GM12878 (cell line): ENCODE measurements at regions of chr11 and their contacts with region 1.

Region 1: DNA sequence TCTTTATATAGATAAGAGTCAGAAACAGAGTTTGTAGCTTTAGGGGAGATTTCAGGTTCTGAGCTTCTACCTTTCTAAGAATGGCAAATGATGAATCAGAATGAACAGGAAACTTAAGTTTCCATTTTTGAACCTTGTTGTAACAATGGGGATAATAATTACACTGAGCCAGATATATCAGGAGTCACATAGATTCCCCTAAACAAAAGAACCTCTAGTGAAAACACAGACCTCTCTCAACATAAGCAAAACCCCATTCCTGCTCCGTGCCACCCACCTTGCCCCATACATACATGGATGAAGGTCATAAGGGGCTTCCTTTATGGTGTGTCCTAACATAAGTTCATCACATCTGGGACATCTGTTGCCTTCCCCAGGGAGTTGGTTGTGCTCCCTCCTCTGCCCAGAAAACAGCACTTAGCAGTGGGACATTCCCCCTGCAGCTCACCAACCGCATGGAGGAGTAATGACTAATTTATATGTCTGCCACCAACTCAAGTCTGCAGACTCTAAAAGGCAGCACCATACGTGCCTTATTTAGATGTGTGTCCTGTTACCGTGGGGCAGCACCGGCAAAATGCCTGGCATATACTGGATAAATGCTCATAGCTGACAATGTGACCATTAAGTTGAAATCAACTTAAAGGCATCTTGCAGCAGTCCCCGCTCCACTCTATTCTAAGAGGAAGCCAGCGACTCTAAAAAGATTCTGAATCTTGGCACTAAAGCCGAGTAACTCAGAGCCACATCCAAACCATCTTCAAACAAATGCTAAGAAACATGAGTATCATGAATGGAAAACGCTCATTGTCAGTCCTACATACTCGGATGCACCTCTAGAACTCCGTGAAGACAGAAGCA is 8.0 kb downstream of the JAML start:
- DNase-seq: no peak
- ATAC-seq: peak; percentile 82
- H3K4me3 ChIP-seq: peak overlapping the region; percentile 15; the same call in 1 of the 2 replicates
- H3K27ac ChIP-seq: peak overlapping the region; percentile 33; the same call in 1 of the 2 replicates
- H3K4me1 ChIP-seq: peaks cover 36% of the 10 kb centered on the region
- H3K27me3 ChIP-seq: no peaks in the 10 kb centered on the region
- CTCF ChIP-seq: peak in 1 of 3 experiments; percentile 17; a peak in 2 of 6 replicates
- EP300 ChIP-seq: peak in 1 of 2 experiments; percentile 64; a peak in 1 of 4 replicates
- POLR2A ChIP-seq: no peak
- RAD21 ChIP-seq: peak; percentile 34; the same call in 1 of the 2 replicates

Region 2: DNA sequence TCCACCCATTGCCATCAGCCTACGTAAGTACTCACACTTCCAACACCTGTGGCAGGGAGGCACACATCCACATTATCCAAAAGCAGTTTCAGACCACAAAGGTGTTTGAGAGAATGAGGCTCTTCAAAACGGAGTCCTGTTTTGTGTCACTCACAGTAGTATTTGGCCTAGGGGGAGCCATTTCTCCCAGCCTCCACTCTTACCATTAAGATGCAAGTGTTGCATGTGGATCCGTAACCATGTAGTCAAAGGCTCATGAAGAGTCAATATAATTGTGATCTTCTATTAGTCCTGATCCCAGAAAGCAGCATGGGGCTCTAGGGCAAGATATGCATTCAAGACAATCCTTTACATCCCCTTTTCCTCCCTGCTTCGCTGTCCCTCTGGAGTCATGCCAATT is 189.2 kb before region 1 on chr11:
- CTCF ChIA-PET with region 1: no interaction called
- POLR2A ChIA-PET with region 1: no interaction called
- RAD21 ChIA-PET with region 1: no interaction called
- SMC1A ChIA-PET with region 1: no interaction called
- in situ Hi-C with region 1: no loop called
- intact Hi-C with region 1: no loop called
- DNase-seq: no peak
- ATAC-seq: no peak
- H3K4me3 ChIP-seq: no peak overlapping the region
- H3K27ac ChIP-seq: no peak overlapping the region
- H3K4me1 ChIP-seq: no peaks in the 10 kb centered on the region
- H3K27me3 ChIP-seq: no peaks in the 10 kb centered on the region
- CTCF ChIP-seq: no peak
- EP300 ChIP-seq: no peak
- POLR2A ChIP-seq: no peak
- RAD21 ChIP-seq: no peak

Region 3: DNA sequence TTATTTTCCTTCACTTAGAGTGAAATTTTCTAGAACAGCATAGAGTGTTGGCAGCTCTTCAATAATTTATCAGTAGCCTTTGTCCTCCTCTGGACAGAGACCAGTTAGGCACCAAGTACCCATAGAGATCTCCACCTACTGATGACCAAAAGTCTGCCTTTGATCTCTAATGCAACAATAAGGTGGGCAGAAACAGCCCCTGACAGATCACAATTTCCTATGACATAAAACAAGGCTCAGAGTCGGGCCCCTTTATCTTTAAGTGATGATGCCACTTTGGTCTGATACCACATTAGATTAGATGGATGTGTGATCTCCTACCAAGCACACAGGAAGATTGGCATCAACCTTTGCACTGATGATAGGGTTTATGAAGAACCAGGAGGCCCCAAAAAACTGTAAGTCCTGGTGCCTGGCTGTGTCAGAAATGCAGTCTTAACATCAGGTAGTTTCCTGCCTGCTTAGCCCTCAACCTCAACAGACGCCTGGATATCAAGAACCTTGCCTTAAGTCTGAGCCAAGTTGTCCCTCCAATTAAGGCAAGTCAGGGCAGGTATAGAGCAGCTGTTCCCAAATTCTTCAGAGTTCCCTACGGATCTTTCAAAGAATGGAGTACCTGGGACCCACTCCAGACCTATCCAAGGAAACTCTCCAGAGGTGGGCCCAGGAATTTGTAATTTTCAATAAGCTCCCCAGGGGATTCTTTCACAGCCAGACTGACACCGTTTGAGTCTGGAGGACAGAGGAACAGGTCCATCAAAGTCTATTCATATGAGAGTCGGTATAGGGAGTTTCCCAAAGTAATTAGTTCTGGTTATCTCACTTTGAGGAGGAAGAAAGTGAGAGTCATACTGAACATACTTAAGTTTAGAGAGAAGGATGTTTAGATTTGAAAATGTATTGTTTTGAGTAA is 170.5 kb before region 1 on chr11:
- CTCF ChIA-PET with region 1: no interaction called
- POLR2A ChIA-PET with region 1: no interaction called
- RAD21 ChIA-PET with region 1: no interaction called
- SMC1A ChIA-PET with region 1: no interaction called
- in situ Hi-C with region 1: no loop called
- intact Hi-C with region 1: no loop called
- DNase-seq: peak; percentile 44
- ATAC-seq: peak; percentile 88
- H3K4me3 ChIP-seq: no peak overlapping the region
- H3K27ac ChIP-seq: no peak overlapping the region
- H3K4me1 ChIP-seq: peaks cover 20% of the 10 kb centered on the region
- H3K27me3 ChIP-seq: no peaks in the 10 kb centered on the region
- CTCF ChIP-seq: no peak
- EP300 ChIP-seq: no peak
- POLR2A ChIP-seq: no peak
- RAD21 ChIP-seq: no peak

Region 4: DNA sequence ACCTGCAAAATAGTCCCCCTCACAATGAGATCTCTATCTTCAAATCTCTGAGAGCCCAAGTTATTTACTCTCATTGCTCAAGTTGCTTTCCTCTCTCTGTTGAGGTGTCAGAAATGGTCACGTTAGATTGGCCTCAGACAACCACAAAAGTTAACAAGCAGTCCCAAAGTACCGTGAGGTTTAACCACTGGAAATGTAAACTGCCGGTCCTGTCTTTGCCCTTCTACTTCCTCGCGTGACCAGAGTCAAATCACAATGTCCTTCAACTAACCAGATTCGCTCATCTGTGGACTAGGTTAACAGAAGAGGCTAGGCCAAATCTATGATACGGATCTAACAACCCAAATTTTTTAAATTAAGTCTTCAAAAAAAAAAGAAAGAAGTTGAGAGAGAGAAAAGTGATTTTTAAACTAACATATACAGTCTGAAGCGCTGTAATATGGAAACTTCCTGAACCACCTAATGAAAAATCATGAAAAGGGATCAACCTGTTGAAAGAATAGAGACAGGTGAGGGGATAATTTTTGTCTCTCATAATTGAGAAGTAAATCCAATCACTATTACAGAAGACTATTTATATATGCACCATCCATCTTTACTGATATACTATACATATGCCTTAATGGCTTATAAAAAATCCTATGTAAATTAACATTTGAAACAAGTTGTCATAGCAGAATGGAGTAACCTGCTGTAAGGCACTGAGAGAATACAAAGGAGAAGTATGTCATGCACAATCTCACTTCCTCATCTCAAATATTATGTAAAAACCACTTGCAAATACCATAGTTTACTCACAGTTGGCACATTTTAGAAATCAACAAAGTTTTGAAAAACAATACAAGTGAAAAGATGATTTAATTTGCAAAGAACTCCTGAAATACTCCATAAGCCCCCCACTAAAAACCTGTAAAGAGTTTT is 11.3 kb after region 1 on chr11:
- CTCF ChIA-PET with region 1: interaction called, 28 read pairs
- POLR2A ChIA-PET with region 1: interaction called, 17 read pairs
- RAD21 ChIA-PET with region 1: interaction called, 43 read pairs
- SMC1A ChIA-PET with region 1: interaction called, 80 read pairs
- in situ Hi-C with region 1: no loop called
- intact Hi-C with region 1: no loop called
- DNase-seq: no peak
- ATAC-seq: peak; percentile 85
- H3K4me3 ChIP-seq: no peak overlapping the region
- H3K27ac ChIP-seq: peak overlapping the region; percentile 45; the same call in 1 of the 2 replicates
- H3K4me1 ChIP-seq: peaks cover 30% of the 10 kb centered on the region
- H3K27me3 ChIP-seq: no peaks in the 10 kb centered on the region
- CTCF ChIP-seq: no peak
- EP300 ChIP-seq: peak; percentile 90 to 94
- POLR2A ChIP-seq: no peak
- RAD21 ChIP-seq: no peak

Region 5: GRCh38 chr11:118240999-118241768 is 24.3 kb after region 1 on chr11:
- CTCF ChIA-PET with region 1: interaction called, 7 read pairs
- POLR2A ChIA-PET with region 1: interaction called, 6 read pairs
- RAD21 ChIA-PET with region 1: interaction called, 23 read pairs
- SMC1A ChIA-PET with region 1: interaction called, 54 read pairs
- in situ Hi-C with region 1: no loop called
- intact Hi-C with region 1: no loop called
- DNase-seq: no peak
- ATAC-seq: peak; percentile 90
- H3K4me3 ChIP-seq: no peak overlapping the region
- H3K27ac ChIP-seq: no peak overlapping the region
- H3K4me1 ChIP-seq: peaks cover 19% of the 10 kb centered on the region
- H3K27me3 ChIP-seq: no peaks in the 10 kb centered on the region
- CTCF ChIP-seq: no peak
- EP300 ChIP-seq: peak; percentile 51 to 82; a peak in 3 of 4 replicates
- POLR2A ChIP-seq: no peak
- RAD21 ChIP-seq: no peak

Region 6: GRCh38 chr11:118247047-118247446 is 30.2 kb after region 1 on chr11:
- CTCF ChIA-PET with region 1: interaction called, 5 read pairs
- POLR2A ChIA-PET with region 1: interaction called, 6 read pairs
- RAD21 ChIA-PET with region 1: interaction called, 23 read pairs
- SMC1A ChIA-PET with region 1: interaction called, 54 read pairs
- in situ Hi-C with region 1: no loop called
- intact Hi-C with region 1: loop called (anchors 1 kb)
- DNase-seq: no peak
- ATAC-seq: peak; percentile 2; the same call in 1 of the 3 replicates
- H3K4me3 ChIP-seq: no peak overlapping the region
- H3K27ac ChIP-seq: no peak overlapping the region
- H3K4me1 ChIP-seq: peaks cover 7% of the 10 kb centered on the region; the same call in 1 of the 2 replicates
- H3K27me3 ChIP-seq: no peaks in the 10 kb centered on the region
- CTCF ChIP-seq: no peak; a peak in 1 of 6 replicates
- EP300 ChIP-seq: no peak
- POLR2A ChIP-seq: no peak
- RAD21 ChIP-seq: 0 out of 2 replicates have a peak, but pooled peaks have one; percentile 11

Region 7: GRCh38 chr11:118251858-118252652 is 35.2 kb after region 1 on chr11 and contains the start of gene MPZL3:
- CTCF ChIA-PET with region 1: interaction called, 5 read pairs
- POLR2A ChIA-PET with region 1: interaction called, 6 read pairs
- RAD21 ChIA-PET with region 1: interaction called, 9 read pairs
- SMC1A ChIA-PET with region 1: interaction called, 16 read pairs
- in situ Hi-C with region 1: no loop called
- intact Hi-C with region 1: loop called (anchors 1 kb)
- DNase-seq: peak; percentile 85
- ATAC-seq: peak; percentile 81
- H3K4me3 ChIP-seq: peak within 1 kb of the TSS; percentile 83
- H3K27ac ChIP-seq: peak within 1 kb of the TSS; percentile 87
- H3K4me1 ChIP-seq: no peaks in the 10 kb centered on the region
- H3K27me3 ChIP-seq: no peaks in the 10 kb centered on the region
- CTCF ChIP-seq: no peak
- EP300 ChIP-seq: peak in 1 of 2 experiments; percentile 17; a peak in 1 of 4 replicates
- POLR2A ChIP-seq: peak; percentile 80
- RAD21 ChIP-seq: no peak
- polyA plus RNA-seq, gene MPZL3: 2.1 to 7.5 TPM